ENCODE measurements at regions of chr17 and their contacts with region 1.

Region 1: GRCh38 chr17:40121181-40122135 is at the start of gene MSL1:
- DNase-seq: peak; percentile 84
- ATAC-seq: peak; percentile 29
- H3K4me3 Mint-ChIP-seq: peak within 1 kb of the TSS; percentile 84
- H3K27ac Mint-ChIP-seq: peak within 1 kb of the TSS; percentile 90
- H3K4me1 Mint-ChIP-seq: peaks cover 26% of the 10 kb centered on the region
- H3K27me3 Mint-ChIP-seq: no peaks in the 10 kb centered on the region
- CTCF ChIP-seq: no peak
- total RNA-seq, gene MSL1: 69.2 to 78.1 TPM (median 73.7 TPM) in 3 replicates

Region 2: GRCh38 chr17:40098846-40099618 is 22.4 kb before region 1 on chr17:
- CTCF ChIA-PET with region 1: interaction called, 5 read pairs
- POLR2A ChIA-PET with region 1: interaction called, 14 read pairs
- DNase-seq: peak; percentile 99
- ATAC-seq: peak; percentile 79
- H3K4me3 Mint-ChIP-seq: peak overlapping the region; percentile 79
- H3K27ac Mint-ChIP-seq: peak overlapping the region; percentile 44
- H3K4me1 Mint-ChIP-seq: peaks cover 51% of the 10 kb centered on the region
- H3K27me3 Mint-ChIP-seq: peaks cover 47% of the 10 kb centered on the region
- CTCF ChIP-seq: no peak

Region 3: DNA sequence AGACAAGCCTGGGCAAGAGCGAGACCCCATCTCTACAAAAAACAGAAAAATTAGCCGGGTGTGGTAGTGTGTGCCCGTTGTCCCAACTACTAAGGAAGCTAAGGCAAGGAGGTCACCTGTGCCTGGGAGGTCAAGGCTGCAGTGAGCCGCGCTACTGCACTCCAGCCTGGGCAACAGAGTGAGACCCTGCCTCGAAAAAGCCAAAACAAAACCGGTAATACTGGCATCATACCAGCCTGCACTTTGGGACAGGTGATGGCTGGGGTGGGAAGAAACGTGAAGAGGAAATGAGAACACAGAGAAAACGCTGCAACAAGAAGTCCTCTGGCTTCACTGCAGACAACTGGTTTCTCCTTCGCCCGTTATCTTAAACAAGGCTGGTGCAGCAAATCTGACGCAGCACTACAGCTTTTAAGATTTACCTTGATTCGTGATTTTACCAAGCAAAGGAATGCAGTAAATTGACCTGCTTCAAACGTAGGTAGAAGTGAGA is 18.2 kb after region 1 on chr17:
- CTCF ChIA-PET with region 1: interaction called, 4 read pairs
- POLR2A ChIA-PET with region 1: interaction called, 15 read pairs
- DNase-seq: no peak
- ATAC-seq: no peak
- H3K4me3 Mint-ChIP-seq: peak overlapping the region; percentile 94
- H3K27ac Mint-ChIP-seq: peak overlapping the region; percentile 100
- H3K4me1 Mint-ChIP-seq: peaks cover 19% of the 10 kb centered on the region
- H3K27me3 Mint-ChIP-seq: no peaks in the 10 kb centered on the region
- CTCF ChIP-seq: no peak

Region 4: GRCh38 chr17:40168262-40168832 is 46.9 kb after region 1 on chr17:
- CTCF ChIA-PET with region 1: interaction called, 13 read pairs
- POLR2A ChIA-PET with region 1: interaction called, 3 read pairs
- DNase-seq: no peak
- ATAC-seq: peak; percentile 84
- H3K4me3 Mint-ChIP-seq: no peak overlapping the region
- H3K27ac Mint-ChIP-seq: peak overlapping the region; percentile 98
- H3K4me1 Mint-ChIP-seq: peaks cover 5% of the 10 kb centered on the region
- H3K27me3 Mint-ChIP-seq: no peaks in the 10 kb centered on the region; the same call in 1 of the 2 replicates
- CTCF ChIP-seq: no peak; the same call in 1 of the 2 replicates

Measured in WTC11 (cell line).